H1 (cell line): ENCODE measurements at regions of chr13 and their contacts with region 1.

Region 1: GRCh38 chr13:49278211-49278610 is 30.5 kb downstream of the CDADC1 start:
- DNase-seq: no peak
- H3K4me3 ChIP-seq: no peak overlapping the region
- H3K27ac ChIP-seq: no peak overlapping the region
- H3K4me1 ChIP-seq: peaks cover 2 to 8% (median 4%) of the 10 kb centered on the region in 4 experiments; a peak in 2 of 7 replicates
- H3K27me3 ChIP-seq: no peaks in the 10 kb centered on the region
- CTCF ChIP-seq: no peak
- EP300 ChIP-seq: no peak
- POLR2A ChIP-seq: no peak
- RAD21 ChIP-seq: no peak

Region 2: GRCh38 chr13:49132479-49133002 is 145.7 kb before region 1 on chr13:
- CTCF ChIA-PET with region 1: no interaction called
- POLR2A ChIA-PET with region 1: no interaction called
- DNase-seq: no peak
- H3K4me3 ChIP-seq: no peak overlapping the region
- H3K27ac ChIP-seq: no peak overlapping the region
- H3K4me1 ChIP-seq: peaks cover 0 to 4% (median 3%) of the 10 kb centered on the region in 4 experiments; a peak in 3 of 7 replicates
- H3K27me3 ChIP-seq: no peaks in the 10 kb centered on the region
- CTCF ChIP-seq: no peak
- EP300 ChIP-seq: no peak
- POLR2A ChIP-seq: no peak
- RAD21 ChIP-seq: no peak

Region 3: DNA sequence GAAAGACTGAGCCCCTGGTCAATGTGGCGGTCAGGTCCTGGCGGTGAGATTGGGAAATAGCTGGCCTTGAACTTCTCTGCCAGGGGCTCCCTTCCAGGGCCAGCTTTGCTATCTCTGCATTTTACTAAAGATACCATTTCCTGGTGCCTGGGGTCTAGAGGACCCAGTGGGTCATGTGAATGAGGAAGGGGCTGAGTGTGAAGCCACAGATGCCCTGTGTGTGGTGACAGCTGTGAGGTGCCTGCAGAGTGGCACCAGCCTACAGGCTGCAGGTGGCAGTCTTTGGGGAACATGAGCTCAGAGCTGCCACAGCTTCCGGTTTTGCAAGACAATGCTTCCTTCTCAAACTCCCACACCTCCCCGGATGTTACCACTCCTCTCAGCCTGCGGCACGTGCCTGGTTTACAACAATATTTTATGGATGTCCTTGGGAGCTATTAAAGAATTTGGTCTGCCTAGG is 63.3 kb before region 1 on chr13:
- CTCF ChIA-PET with region 1: interaction called, 15 read pairs
- POLR2A ChIA-PET with region 1: no interaction called
- DNase-seq: peak in 1 of 2 experiments; percentile 59
- H3K4me3 ChIP-seq: no peak overlapping the region
- H3K27ac ChIP-seq: no peak overlapping the region
- H3K4me1 ChIP-seq: peaks cover 3 to 11% (median 7%) of the 10 kb centered on the region in 4 experiments; a peak in 6 of 7 replicates
- H3K27me3 ChIP-seq: peaks cover 22 to 40% (median 38%) of the 10 kb centered on the region in 4 experiments
- CTCF ChIP-seq: peak; percentile 6 to 61 (median 49); a peak in 3 of 4 replicates
- EP300 ChIP-seq: no peak
- POLR2A ChIP-seq: no peak
- RAD21 ChIP-seq: peak; percentile 15 to 20; a peak in 1 of 4 replicates

Region 4: DNA sequence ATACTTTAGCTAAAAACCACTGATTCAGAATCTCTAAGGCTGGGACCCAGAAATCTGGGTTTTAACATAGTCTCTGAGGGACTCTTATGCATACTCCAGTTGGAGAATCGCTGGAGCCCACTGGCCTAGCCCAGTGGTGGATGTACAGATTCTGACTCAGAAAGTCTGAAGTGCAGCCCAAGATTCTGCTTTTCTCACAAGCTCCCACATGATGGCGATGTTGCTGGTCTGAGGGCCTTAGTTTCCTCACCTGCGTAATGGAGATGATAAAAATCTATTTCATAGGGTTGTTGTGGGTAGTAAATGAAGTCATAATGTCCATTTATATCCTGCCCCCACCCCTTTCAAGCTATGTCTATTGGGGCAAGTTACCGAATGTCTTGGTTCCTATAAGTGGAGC is 38.2 kb before region 1 on chr13:
- CTCF ChIA-PET with region 1: interaction called, 23 read pairs
- POLR2A ChIA-PET with region 1: no interaction called
- DNase-seq: no peak
- H3K4me3 ChIP-seq: no peak overlapping the region
- H3K27ac ChIP-seq: no peak overlapping the region
- H3K4me1 ChIP-seq: no peaks in the 10 kb centered on the region
- H3K27me3 ChIP-seq: no peaks in the 10 kb centered on the region
- CTCF ChIP-seq: peak; percentile 49 to 78 (median 61)
- EP300 ChIP-seq: no peak
- POLR2A ChIP-seq: no peak
- RAD21 ChIP-seq: peak; percentile 65 to 75

Region 5: DNA sequence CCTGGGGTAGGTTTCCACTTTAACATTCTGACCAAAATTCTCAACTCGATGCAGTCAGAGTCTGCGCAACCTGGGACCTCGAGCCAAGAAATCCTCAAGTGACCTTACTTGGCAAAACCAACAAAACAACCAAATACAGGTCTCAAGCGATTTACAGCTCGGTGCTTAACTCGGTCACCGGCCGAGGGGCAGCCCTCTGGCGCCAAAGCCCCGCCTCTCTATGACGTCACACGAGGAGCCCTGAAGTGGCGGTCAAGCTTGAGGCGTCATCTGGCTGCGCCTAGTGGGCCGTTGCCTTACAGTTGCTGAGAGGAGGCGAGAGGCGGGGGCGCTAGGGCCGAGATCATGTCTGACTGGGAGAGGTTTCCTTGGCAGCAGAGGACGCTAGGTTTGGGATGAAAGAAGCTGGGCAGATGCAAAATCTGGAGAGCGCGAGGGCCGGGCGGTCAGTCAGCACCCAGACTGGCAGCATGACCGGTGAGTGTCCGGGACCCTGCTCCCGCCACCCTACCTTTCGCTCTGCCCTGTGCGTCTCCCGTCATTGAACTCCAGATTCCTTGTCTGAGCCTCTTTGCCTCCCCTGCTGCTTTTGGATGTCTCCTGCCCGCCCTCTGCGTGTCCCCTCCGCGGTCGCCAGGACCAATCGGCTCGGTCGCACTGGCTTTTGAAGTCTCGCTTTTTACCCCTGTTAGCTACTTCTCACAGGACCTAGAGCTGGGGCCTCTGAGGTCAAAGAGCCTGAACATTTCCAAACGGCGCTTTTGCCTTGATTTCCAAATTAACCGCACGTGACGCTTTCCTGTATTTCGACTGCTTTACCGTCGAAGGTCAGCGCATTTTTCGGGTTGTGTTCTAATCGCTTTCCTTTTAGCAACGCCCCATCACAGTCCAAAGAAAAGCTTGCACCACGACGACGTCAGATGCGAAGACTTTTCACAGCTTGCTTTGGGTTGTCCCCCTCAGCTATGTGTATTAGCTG is 30.3 kb before region 1 on chr13 and contains the start of gene CDADC1:
- CTCF ChIA-PET with region 1: interaction called, 27 read pairs
- POLR2A ChIA-PET with region 1: no interaction called
- DNase-seq: peak; percentile 91 to 99
- H3K4me3 ChIP-seq: peak within 1 kb of the TSS; percentile 72 to 88 (median 82)
- H3K27ac ChIP-seq: peak within 1 kb of the TSS; percentile 47; the same call in 1 of the 2 replicates
- H3K4me1 ChIP-seq: no peaks in the 10 kb centered on the region; a peak in 1 of 7 replicates
- H3K27me3 ChIP-seq: no peaks in the 10 kb centered on the region
- CTCF ChIP-seq: no peak; a peak in 1 of 4 replicates
- EP300 ChIP-seq: no peak; a peak in 1 of 3 replicates
- POLR2A ChIP-seq: peak; percentile 63 to 75
- RAD21 ChIP-seq: no peak
- total RNA-seq, gene CDADC1: 2.7 and 6.5 TPM in 2 replicates

Region 6: DNA sequence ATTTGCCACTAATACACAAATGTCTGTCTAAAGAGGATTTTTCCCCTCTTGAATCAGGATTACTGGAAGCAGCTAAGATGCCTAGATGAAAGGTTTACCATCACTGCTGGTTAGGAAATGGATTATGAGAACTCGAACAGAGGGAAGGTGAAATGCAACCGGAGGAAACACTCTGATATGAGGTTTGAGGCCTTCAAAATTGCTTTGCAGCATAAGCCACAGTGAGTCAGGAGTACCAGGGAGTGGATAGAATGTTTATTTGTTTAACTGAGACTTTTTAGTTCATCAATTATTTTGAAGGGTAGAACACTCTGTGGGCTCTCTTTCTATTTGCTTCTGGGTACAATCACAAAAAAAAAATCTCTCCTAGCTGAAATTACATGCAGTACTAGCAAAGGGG is 12.4 kb before region 1 on chr13:
- CTCF ChIA-PET with region 1: interaction called, 47 read pairs
- POLR2A ChIA-PET with region 1: no interaction called
- DNase-seq: no peak
- H3K4me3 ChIP-seq: no peak overlapping the region
- H3K27ac ChIP-seq: no peak overlapping the region
- H3K4me1 ChIP-seq: 0 out of 7 replicates have a peak, but pooled peaks cover 0 to 3% (median 0%) of the 10 kb centered on the region in 4 experiments
- H3K27me3 ChIP-seq: no peaks in the 10 kb centered on the region
- CTCF ChIP-seq: no peak
- EP300 ChIP-seq: no peak
- POLR2A ChIP-seq: no peak
- RAD21 ChIP-seq: no peak

Region 7: DNA sequence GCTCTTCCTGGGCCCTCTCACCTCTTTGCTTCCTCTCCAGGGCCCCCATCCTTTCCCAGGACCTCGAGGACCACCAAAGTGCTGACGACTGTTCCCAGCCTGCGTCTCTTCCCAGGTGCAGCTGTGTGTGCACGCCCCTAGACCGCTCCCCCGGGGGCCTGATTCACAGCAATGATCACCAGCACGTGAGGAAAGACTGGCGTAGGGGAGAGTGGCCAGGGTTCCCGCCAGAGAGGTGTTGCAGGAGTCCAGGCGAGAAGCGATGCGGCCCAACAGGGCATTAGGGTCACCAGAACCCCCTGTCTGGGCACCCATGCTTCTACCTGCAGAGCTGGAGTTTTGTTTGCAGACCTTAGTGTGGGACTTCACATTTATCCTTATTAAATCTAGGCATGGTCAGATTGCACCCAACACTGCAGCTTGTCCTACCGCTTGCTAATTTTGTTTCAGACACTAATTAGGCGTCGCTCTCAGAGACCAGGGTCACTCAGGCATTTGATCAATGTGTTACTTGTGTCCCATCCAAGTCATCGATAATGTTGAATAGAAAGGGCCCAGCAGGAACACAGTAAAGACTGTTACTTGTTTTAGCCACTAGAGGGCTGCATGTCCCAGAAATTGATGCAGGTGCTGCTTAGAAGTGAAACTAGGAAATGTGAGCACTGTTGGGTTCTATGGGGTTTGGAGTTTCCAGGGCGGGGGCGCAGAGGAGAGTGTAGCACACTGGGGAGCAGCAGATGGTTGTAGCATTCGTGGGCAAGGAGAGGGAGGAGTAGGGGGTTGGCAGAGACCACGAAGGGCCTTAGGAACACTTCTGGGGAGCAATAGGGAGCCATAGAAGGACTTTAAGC is 22.8 kb after region 1 on chr13:
- CTCF ChIA-PET with region 1: interaction called, 20 read pairs
- POLR2A ChIA-PET with region 1: no interaction called
- DNase-seq: peak in 1 of 2 experiments; percentile 57
- H3K4me3 ChIP-seq: no peak overlapping the region
- H3K27ac ChIP-seq: no peak overlapping the region
- H3K4me1 ChIP-seq: peaks cover 0 to 2% (median 0%) of the 10 kb centered on the region in 4 experiments; a peak in 2 of 7 replicates
- H3K27me3 ChIP-seq: peaks cover 0 to 2% (median 0%) of the 10 kb centered on the region in 4 experiments; a peak in 1 of 7 replicates
- CTCF ChIP-seq: peak in 2 of 3 experiments; percentile 79 to 86; a peak in 3 of 4 replicates
- EP300 ChIP-seq: no peak
- POLR2A ChIP-seq: no peak
- RAD21 ChIP-seq: peak; percentile 95 to 96